Cardiac septum (tissue), 1 donor: ENCODE measurements at regions of chr5 and their contacts with region 1.

Region 1: DNA sequence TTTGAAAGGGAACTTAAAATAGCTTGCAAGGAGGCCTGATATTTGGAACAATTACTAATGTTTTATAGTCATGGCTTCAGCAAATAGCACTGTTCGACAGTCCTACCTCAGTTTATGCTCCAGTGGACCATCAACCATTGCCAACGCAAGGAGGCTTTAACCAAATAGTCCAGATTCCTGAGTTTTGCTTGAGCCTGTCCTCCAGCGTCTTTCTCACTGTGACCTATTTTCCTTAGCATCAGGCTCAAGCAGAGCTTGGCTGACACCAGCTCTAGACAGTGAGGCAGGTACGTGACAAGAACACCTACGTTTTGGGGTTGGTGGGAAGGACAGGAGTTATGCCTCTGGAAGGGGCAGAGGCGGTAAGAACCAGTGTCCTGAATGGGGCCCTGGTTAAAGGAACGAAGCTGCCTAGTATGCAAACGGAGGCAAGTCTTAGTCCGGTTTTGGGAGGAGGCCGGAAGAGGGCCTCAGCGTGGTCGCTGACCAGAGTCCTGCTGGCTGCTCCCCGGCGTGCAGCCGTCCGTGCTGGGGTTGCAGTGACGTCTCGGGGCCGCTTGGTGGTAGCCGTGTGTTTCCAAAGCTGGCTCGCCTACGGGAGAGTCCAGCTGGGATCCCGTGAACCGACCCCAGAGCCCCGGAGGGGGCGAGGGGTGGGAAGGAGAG is 998 bp upstream of the FGF18 start:
- DNase-seq: peak; percentile 88

Region 2: GRCh38 chr5:171580502-171581265 is 162.2 kb after region 1 on chr5:
- intact Hi-C with region 1: loop called (anchors 2 kb)
- DNase-seq: no peak

Region 3: GRCh38 chr5:171630027-171630669 is 211.7 kb after region 1 on chr5:
- intact Hi-C with region 1: loop called (anchors 2 kb)
- DNase-seq: peak; percentile 85

Region 4: GRCh38 chr5:171845857-171846256 is 427.4 kb after region 1 on chr5:
- intact Hi-C with region 1: loop called (anchors 2 kb)
- DNase-seq: no peak